MCF 10A (cell line): ENCODE measurements at regions of chr1 and their contacts with region 1.

Region 1: GRCh38 chr1:12619792-12620487 is 1.9 kb upstream of the DHRS3 start:
- DNase-seq: peak; percentile 86
- H3K4me3 Mint-ChIP-seq: peak overlapping the region; percentile 95
- H3K27ac Mint-ChIP-seq: no peak overlapping the region
- H3K4me1 Mint-ChIP-seq: peaks cover 29% of the 10 kb centered on the region
- H3K27me3 Mint-ChIP-seq: no peaks in the 10 kb centered on the region
- CTCF ChIP-seq: peak; percentile 96

Region 2: DNA sequence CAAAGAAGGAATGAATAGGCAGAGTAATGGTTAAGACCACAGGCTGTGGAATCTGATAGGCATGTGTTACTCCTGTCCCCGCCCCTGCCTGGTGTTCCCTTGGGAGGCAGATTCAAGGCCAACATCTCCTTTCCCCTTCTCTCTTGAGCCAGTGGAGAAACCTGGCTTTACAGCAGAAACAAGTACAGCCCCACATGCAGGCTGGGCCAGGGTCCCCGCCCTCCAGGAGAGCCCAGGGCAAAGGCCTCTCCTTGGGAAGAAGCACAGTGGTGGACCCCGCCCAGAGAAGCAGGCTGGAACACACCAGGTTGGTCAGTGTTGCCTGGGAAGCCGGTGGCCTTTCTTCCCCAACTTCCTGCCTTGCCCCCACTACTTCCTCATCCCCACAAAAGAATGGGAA is 851.1 kb before region 1 on chr1:
- CTCF ChIA-PET with region 1: no interaction called
- POLR2A ChIA-PET with region 1: no interaction called
- intact Hi-C with region 1: no loop called
- DNase-seq: no peak
- H3K4me3 Mint-ChIP-seq: no peak overlapping the region
- H3K27ac Mint-ChIP-seq: no peak overlapping the region
- H3K4me1 Mint-ChIP-seq: no peaks in the 10 kb centered on the region
- H3K27me3 Mint-ChIP-seq: no peaks in the 10 kb centered on the region
- CTCF ChIP-seq: no peak

Region 3: DNA sequence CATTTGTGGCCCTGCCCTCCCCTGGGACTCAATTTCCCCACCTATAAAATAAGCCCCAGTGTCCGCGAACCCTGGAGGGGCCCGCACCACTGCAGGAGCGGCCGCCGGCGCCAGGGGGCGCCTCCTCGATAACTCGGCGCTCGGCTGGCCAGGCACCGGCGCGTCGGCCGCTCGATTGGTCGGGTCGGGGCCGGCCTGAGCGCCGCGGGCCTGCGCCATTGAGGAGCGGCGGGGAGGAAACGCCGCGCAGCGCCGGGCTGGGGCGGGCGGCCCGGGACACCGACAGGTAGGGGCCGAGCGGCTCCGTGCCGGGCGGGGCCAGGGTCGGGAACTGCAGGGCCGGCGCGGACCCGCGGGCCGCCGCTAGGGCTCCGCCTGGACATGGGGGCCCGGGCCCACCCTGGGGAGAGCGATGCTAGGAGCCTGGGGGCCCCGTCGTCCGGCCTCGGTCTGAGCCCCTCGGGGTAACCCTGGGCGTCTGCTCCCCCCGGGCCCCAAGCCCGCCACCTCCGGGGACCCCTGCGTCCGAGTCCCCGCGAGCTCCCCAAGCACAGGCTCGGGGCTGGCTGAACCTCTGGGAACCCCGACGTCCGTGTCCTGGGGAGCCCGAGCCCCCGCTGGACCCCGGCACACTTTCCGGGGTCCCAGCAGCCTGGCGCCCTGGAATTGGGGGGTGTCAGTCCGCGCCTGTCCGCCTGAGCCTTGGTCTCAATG is 389.9 kb before region 1 on chr1 and contains the start of gene VPS13D:
- CTCF ChIA-PET with region 1: no interaction called
- POLR2A ChIA-PET with region 1: interaction called, 12 read pairs
- intact Hi-C with region 1: no loop called
- DNase-seq: peak; percentile 78
- H3K4me3 Mint-ChIP-seq: peak within 1 kb of the TSS; percentile 85
- H3K27ac Mint-ChIP-seq: peak within 1 kb of the TSS; percentile 88
- H3K4me1 Mint-ChIP-seq: no peaks in the 10 kb centered on the region
- H3K27me3 Mint-ChIP-seq: no peaks in the 10 kb centered on the region
- CTCF ChIP-seq: peak; percentile 96
- total RNA-seq, gene VPS13D: 36.5 and 39.3 TPM in 2 replicates

Region 4: DNA sequence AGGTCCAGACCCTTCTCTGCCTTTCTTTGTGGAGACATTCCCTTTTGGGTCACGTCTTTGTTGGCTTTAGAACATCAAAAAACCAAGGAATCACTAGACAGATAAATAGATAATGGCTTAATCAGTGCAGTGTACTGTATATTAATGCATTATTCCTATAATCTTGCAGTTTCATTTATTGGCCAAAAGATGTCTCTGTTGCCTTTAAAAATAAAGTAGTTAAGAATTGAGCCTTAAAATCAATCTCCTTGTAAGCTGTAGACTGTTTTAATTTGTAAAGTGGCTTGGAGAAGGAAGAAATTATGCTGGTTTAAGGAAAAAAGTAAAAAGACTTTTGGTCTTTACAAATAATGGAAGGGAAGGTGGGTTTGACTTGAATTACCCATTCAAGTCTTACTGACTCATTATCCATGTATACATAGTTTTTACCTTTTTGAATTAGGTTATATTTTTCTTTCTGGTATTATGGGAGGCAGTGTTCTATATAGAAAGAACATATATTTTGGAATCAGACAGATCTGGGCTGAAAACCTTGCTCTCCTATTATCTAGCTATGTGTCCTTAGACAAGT is 305.5 kb before region 1 on chr1:
- CTCF ChIA-PET with region 1: interaction called, 3 read pairs
- POLR2A ChIA-PET with region 1: interaction called, 4 read pairs
- intact Hi-C with region 1: loop called (anchors 1 kb)
- DNase-seq: peak; percentile 8
- H3K4me3 Mint-ChIP-seq: no peak overlapping the region
- H3K27ac Mint-ChIP-seq: no peak overlapping the region
- H3K4me1 Mint-ChIP-seq: no peaks in the 10 kb centered on the region
- H3K27me3 Mint-ChIP-seq: no peaks in the 10 kb centered on the region
- CTCF ChIP-seq: peak; percentile 34

Region 5: DNA sequence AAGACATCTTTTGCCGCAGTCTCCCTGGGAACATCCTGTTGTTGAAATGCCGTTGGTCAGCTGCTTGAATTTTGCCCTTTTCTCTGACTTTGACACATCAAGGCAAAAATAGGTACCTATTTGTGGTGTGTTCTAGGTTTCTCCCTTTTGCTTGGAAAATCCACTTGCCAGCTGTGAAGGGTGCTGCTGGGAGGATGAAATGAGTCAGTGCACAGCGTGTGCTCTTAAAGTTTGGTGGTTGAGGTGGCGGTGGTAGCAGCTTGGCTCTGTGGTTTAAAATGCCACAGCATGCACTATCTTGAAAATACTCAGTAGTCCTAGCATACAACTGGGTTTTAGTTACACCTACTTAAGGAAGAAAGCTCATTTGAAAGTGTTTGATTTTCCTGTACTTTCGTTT is 185.8 kb before region 1 on chr1:
- CTCF ChIA-PET with region 1: interaction called, 4 read pairs
- POLR2A ChIA-PET with region 1: interaction called, 53 read pairs
- intact Hi-C with region 1: loop called (anchors 1 kb)
- DNase-seq: peak; percentile 70
- H3K4me3 Mint-ChIP-seq: no peak overlapping the region
- H3K27ac Mint-ChIP-seq: peak overlapping the region; percentile 36
- H3K4me1 Mint-ChIP-seq: peaks cover 32% of the 10 kb centered on the region
- H3K27me3 Mint-ChIP-seq: no peaks in the 10 kb centered on the region
- CTCF ChIP-seq: no peak

Region 6: GRCh38 chr1:12549460-12550349 is 70.2 kb before region 1 on chr1:
- CTCF ChIA-PET with region 1: no interaction called
- POLR2A ChIA-PET with region 1: interaction called, 9 read pairs
- intact Hi-C with region 1: loop called (anchors 5 kb)
- DNase-seq: peak; percentile 93
- H3K4me3 Mint-ChIP-seq: peak overlapping the region; percentile 70
- H3K27ac Mint-ChIP-seq: peak overlapping the region; percentile 47
- H3K4me1 Mint-ChIP-seq: peaks cover 10% of the 10 kb centered on the region
- H3K27me3 Mint-ChIP-seq: peaks cover 33% of the 10 kb centered on the region
- CTCF ChIP-seq: no peak